Dendritic cell treated with granulocyte-macrophage colony-stimulating factor and Interleukin-4, amounts not matched to agents 40 ng/mL and 50 ng/mL, for 4 days (primary cell): ENCODE measurements at regions of chr10 and their contacts with region 1.

Region 1: DNA sequence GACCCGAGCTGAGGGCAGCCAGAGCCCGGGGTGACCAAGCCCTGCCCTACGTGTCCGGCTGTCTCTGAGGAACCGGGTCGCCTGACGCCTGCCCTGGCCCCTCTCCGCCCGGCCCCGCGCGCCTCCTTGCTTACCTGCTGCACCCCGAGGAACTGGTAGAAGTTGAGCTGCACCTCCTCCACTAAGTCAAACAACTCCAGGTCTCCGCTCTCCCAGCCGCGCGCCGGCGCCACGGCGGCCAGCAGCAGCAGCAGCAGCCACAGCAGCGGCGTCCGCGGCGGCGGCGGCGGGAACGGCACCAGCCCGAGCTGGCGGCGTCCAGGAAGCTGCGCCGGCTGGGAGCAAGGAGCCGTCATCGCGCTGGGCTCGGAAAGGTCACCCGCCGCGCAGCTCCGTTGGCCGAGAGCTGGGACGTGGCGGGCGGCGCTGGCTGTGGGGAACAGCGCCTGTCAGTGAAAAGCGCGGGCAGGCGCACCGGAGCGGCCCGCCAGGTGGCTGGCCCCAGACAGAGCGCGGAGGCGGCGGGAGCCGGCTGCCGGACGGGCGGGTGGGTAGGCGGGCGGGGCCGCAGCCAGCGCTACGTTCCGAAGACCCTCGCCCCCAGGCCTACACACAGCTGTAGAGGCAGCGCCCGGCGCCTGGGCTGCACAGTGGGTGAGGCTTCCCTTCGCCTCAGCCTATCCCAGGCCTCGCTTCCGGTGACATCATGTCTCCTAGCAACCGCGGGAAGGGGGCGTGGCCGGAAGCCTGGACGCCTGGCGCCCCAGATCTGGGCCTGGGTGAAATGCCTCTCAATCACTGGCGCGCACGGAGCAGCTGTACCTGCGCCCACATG is at the start of gene DNAJC1:
- H3K4me3 Mint-ChIP-seq: peak within 1 kb of the TSS; percentile 90
- H3K27ac Mint-ChIP-seq: peak within 1 kb of the TSS; percentile 87
- H3K4me1 Mint-ChIP-seq: peaks cover 23% of the 10 kb centered on the region
- H3K27me3 Mint-ChIP-seq: no peaks in the 10 kb centered on the region

Region 2: DNA sequence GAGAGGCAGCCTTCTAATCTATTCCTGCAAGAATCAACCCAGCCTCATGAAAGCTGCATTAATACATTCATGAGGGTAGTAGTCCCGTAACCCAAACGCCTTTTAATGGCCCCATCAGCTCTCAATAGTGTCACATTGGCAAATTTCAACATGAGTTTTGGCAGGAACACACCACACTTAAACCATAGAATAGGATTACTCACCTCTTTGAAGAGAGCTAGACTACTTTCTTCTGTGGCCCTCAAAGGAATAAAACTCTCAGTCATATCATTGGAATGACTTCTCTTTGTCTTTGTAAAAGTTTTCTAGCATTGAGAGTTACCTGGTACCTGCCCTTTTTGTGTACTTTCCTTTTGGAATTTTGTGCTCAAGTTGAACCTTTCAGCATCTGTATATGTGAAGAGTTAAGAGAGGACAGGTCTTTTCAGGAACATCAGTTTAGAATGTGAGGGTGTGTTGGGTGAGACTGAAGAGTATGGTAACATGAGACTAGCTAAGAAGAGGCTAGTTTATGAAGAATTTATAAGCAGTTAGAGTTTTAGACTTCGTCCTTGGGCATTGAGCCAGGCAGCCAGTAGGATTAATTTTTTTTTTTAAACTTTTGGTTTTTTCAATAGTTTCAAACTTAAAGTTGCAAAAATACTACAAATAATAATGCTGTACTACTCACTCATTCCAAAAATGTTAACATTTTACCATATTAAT is 376.7 kb before region 1 on chr10:
- intact Hi-C with region 1: no loop called
- H3K4me3 Mint-ChIP-seq: no peak overlapping the region
- H3K27ac Mint-ChIP-seq: no peak overlapping the region
- H3K4me1 Mint-ChIP-seq: peaks cover 24% of the 10 kb centered on the region
- H3K27me3 Mint-ChIP-seq: no peaks in the 10 kb centered on the region

Region 3: GRCh38 chr10:21912625-21913024 is 90.7 kb before region 1 on chr10:
- intact Hi-C with region 1: no loop called
- H3K4me3 Mint-ChIP-seq: no peak overlapping the region
- H3K27ac Mint-ChIP-seq: no peak overlapping the region
- H3K4me1 Mint-ChIP-seq: no peaks in the 10 kb centered on the region
- H3K27me3 Mint-ChIP-seq: no peaks in the 10 kb centered on the region

Region 4: DNA sequence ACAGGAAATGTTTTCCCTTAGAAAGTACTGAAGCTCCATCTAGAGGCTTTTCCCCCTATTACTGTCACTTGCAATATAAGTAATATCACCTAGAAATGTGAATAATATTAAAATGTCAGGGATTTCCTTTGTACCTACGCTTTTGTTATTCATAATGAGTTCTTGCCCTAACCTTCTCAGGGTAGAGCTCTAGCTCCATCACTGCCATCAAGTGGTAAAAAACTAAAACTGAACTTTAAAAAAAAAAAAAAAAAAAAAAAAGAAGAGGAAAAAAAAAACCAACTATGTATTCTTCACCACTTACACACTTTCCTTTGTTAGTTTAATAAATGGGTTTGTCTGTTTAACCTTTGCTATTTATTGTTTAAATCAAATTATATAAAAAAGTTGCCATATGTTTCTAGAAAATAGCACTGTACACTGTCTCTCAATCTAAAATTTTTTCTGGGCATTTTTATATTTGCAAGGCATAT is 49.7 kb before region 1 on chr10:
- intact Hi-C with region 1: no loop called
- H3K4me3 Mint-ChIP-seq: no peak overlapping the region
- H3K27ac Mint-ChIP-seq: no peak overlapping the region
- H3K4me1 Mint-ChIP-seq: no peaks in the 10 kb centered on the region
- H3K27me3 Mint-ChIP-seq: no peaks in the 10 kb centered on the region

Region 5: DNA sequence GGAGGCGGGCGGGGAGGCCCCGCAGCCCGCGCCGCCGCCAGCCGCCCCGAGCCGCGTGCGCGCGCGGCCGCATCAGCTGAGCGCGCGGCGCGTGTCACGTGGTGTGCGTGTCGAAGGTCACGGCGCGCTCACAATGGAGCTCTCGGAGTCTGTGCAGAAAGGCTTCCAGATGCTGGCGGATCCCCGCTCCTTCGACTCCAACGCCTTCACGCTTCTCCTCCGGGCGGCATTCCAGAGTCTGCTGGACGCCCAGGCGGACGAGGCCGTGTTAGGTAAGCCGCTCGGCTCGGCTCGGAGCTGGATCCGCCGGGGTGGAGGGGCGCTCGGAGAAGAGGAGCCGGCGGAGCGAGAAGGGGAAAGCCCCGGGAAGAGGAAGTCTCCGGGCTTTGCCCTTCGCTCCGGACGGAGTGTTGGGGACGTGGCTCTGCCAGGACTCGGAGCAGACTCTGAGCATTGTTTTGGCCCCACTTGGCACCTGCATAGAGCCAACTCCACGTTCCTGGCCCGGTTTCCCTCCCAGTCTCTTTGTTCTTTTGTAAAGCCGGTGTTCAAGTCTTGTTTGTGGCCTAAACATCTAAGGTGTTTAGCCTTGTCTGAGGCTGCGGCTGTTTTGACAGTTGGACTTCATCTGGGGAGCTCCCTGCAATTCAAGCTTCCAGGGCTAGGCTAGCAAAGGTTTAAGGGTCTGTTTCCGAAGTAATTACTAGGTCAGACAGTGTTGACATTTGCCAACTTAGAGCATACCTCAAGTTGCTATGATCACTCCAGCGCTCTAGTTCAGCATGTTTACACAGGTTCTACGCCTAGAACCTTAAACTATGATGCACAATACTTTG is 313.2 kb after region 1 on chr10 and contains the start of gene COMMD3:
- intact Hi-C with region 1: loop called (anchors 5 kb)
- H3K4me3 Mint-ChIP-seq: peak within 1 kb of the TSS; percentile 94
- H3K27ac Mint-ChIP-seq: peak within 1 kb of the TSS; percentile 95
- H3K4me1 Mint-ChIP-seq: peaks cover 6% of the 10 kb centered on the region
- H3K27me3 Mint-ChIP-seq: no peaks in the 10 kb centered on the region